ENCODE measurements at regions of chr12 and their contacts with region 1.

Region 1: GRCh38 chr12:93742110-93742934 is 65.1 kb downstream of the CRADD start:
- DNase-seq: peak; percentile 41
- H3K4me3 ChIP-seq: peak overlapping the region; percentile 55
- CTCF ChIP-seq: peak; percentile 45

Region 2: GRCh38 chr12:94074980-94075928 is 332.9 kb after region 1 on chr12:
- in situ Hi-C with region 1: loop called (anchors 25 kb)
- DNase-seq: peak; percentile 62
- H3K4me3 ChIP-seq: no peak overlapping the region
- CTCF ChIP-seq: peak; percentile 76

Measured in astrocyte of the cerebellum (primary cell).